WTC11 (cell line): ENCODE measurements at regions of chr1 and their contacts with region 1.

Region 1: GRCh38 chr1:27416387-27417111 is 24.1 kb downstream of the GPR3 start:
- DNase-seq: no peak
- ATAC-seq: peak; percentile 67
- H3K4me3 Mint-ChIP-seq: no peak overlapping the region
- H3K27ac Mint-ChIP-seq: peak overlapping the region; percentile 50; the same call in 1 of the 2 replicates
- H3K4me1 Mint-ChIP-seq: peaks cover 41% of the 10 kb centered on the region
- H3K27me3 Mint-ChIP-seq: no peaks in the 10 kb centered on the region
- CTCF ChIP-seq: 0 out of 2 replicates have a peak, but pooled peaks have one; percentile 1

Region 2: DNA sequence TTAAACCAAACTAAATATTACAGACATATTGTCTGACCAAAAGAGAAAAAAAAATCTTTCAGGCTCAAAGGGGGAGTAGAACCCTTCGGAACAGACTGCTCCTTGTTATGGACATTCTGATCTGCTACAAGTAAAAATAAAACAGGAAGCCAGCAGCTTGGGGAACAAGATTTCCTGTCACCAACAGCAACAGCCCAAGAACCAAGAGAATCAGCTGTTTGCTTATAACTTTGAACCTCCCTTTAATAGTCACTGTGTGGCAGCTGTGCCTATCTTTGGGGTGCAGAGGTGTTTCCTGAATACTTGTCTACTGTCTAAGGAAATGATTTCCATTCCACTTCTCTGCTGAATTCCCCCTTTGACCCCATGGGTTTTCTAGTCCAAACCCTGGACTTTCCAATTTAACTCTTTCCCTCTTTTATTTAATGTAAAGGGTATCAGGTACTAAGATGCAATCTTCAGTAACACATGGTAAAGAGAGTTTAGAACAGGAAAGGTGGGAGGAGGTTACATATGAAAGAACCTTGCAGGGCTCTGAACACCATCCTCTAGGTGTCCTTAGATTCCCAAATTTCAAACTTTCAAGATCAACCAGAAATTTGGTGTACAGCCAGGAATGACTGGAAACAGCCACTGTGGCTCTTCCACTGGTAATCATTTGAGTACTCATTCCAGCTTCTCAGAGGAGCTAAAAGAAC is 14.5 kb after region 1 on chr1:
- CTCF ChIA-PET with region 1: interaction called, 30 read pairs
- POLR2A ChIA-PET with region 1: interaction called, 7 read pairs
- DNase-seq: no peak
- ATAC-seq: no peak
- H3K4me3 Mint-ChIP-seq: no peak overlapping the region
- H3K27ac Mint-ChIP-seq: peak overlapping the region; percentile 91
- H3K4me1 Mint-ChIP-seq: peaks cover 75% of the 10 kb centered on the region
- H3K27me3 Mint-ChIP-seq: no peaks in the 10 kb centered on the region
- CTCF ChIP-seq: no peak

Region 3: GRCh38 chr1:27525296-27526272 is 109.0 kb after region 1 on chr1:
- CTCF ChIA-PET with region 1: interaction called, 20 read pairs
- POLR2A ChIA-PET with region 1: interaction called, 3 read pairs
- DNase-seq: peak; percentile 79
- ATAC-seq: peak; percentile 50
- H3K4me3 Mint-ChIP-seq: peak overlapping the region; percentile 55
- H3K27ac Mint-ChIP-seq: peak overlapping the region; percentile 85
- H3K4me1 Mint-ChIP-seq: peaks cover 70% of the 10 kb centered on the region
- H3K27me3 Mint-ChIP-seq: no peaks in the 10 kb centered on the region; the same call in 1 of the 2 replicates
- CTCF ChIP-seq: no peak